CD8-positive, alpha-beta memory T cell (primary cell): ENCODE measurements at regions of chr7 and their contacts with region 1.

Region 1: GRCh38 chr7:97064967-97065587 is 40.4 kb upstream of the DLX5 start:
- DNase-seq: peak in 2 of 5 donors; percentile 9 to 23
- H3K4me3 ChIP-seq: no peak overlapping the region
- H3K4me3 Mint-ChIP-seq: no peak overlapping the region
- H3K27ac ChIP-seq: no peak overlapping the region
- H3K27ac Mint-ChIP-seq: no peak overlapping the region
- H3K4me1 ChIP-seq: no peaks in the 10 kb centered on the region
- H3K4me1 Mint-ChIP-seq: no peaks in the 10 kb centered on the region
- H3K27me3 ChIP-seq: no peaks in the 10 kb centered on the region
- H3K27me3 Mint-ChIP-seq: peaks cover 5 to 8% of the 10 kb centered on the region in 2 donors

Region 2: GRCh38 chr7:97078023-97078969 is 13.2 kb after region 1 on chr7:
- CTCF ChIA-PET with region 1: interaction called, 10 read pairs
- POLR2A ChIA-PET with region 1: no interaction called
- DNase-seq: no peak
- H3K4me3 ChIP-seq: no peak overlapping the region
- H3K4me3 Mint-ChIP-seq: no peak overlapping the region
- H3K27ac ChIP-seq: no peak overlapping the region
- H3K27ac Mint-ChIP-seq: no peak overlapping the region
- H3K4me1 ChIP-seq: no peaks in the 10 kb centered on the region
- H3K4me1 Mint-ChIP-seq: no peaks in the 10 kb centered on the region
- H3K27me3 ChIP-seq: no peaks in the 10 kb centered on the region
- H3K27me3 Mint-ChIP-seq: peaks cover 10 to 52% of the 10 kb centered on the region in 2 donors